Activated T-helper 1 cell treated with anti-CD3 and anti-CD28 coated beads, Interleukin-12 subunit alpha, Interleukin-12 subunit beta, Interleukin-2, Interleukin-4 antibody, amounts not matched to agents 30 ng/mL and 10 ng/mL and 1 ng/mL, durations not matched to agents 14 hours and 24 hours and 36 hours (primary cell): ENCODE measurements at regions of chr21 and their contacts with region 1.

Region 1: DNA sequence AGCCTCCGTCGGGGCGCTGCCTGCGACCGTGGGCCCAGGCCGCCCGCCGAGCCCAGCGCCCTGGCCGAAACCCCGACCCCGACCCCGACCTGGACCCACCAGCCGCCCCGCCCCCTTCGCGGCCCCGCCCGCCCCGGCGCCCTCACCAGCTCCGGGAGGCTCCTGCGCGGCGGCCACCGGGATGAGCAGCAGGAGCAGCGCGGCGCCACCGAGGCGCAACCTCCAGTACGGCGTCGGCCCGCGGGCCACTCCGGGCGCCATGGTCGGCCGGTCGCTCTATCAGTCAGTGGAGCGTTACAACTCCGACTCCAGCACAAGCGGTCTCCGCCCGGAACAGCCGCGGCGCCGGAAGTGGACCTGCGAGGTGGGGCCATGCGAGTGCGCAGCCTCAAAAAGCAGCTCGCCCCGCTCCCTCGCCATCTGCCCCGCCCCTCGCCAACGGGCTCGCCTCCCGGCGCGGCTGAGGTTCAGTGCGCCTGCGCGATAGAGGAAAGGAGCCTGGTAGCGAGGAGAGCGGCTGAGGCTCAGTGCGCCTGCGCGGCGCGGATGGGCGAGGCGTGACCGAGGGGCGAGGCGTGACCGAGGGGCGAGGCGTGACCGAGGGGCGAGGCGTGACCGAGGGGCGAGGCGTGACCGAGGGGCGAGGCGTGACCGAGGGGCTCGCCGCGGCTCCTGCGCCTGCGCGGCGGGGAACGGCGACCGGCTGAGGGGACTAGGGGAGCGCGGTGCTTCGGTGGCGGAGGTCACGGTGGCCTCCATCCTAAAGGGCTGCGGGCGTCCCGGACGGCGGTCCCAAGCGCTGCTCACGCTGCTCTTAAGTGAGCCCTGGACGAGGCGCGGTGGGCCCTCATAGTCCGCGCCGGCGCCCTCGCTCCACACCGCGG is at the start of gene PTTG1IP:
- DNase-seq: peak; percentile 100
- H3K4me3 Mint-ChIP-seq: peak within 1 kb of the TSS; percentile 93
- H3K27ac Mint-ChIP-seq: peak within 1 kb of the TSS; percentile 93
- H3K4me1 Mint-ChIP-seq: peaks cover 61% of the 10 kb centered on the region
- H3K27me3 Mint-ChIP-seq: no peaks in the 10 kb centered on the region
- total RNA-seq, gene PTTG1IP: 46.7 and 48.7 TPM in 2 replicates

Region 2: DNA sequence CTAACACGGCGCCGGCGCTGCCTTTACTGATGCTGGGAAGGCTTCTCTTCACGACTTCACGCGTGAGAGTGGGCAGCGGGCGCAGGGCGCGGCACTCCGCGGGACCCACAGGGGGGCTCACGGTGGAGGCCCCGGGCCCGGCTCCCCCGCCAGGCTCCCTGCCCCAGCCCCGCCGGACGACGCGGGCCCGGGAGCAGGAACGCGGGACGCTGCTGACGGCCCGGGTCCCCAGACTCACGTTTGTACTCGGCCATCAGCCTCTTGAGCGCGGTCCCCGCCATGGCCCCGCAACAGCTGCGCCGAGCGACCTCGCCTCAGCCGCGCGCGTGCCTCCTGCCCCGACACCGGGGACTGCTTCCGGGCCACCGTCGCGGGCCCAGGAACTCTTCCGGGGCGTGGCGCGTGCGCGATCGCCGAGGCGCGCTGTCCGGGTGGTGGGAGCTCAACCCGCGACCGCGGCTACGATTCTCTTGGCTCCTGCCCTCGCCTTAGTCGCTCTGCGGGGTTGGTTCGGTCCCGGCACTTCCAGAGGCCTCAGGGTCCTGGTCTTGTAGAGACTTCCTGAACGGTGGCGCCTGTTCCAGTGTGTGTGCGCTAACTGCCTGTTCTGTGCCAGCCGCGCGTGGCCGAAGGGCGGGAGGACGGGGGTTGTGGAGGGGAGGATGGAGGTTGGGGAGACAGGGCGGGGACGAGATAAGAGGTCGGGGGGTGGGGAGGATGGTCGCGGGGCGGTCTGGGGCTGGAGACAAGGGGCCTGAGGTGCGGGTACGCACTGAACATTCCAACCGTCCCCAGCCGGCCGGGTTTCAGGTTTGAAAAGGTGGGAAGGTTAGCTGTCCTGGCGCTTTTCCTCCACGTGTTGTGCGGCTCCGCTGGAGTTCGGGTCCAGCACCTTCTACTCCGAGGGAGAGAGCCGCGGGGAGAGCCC is 71.9 kb before region 1 on chr21 and contains the start of gene UBE2G2:
- intact Hi-C with region 1: loop called (anchors 1 kb)
- DNase-seq: peak; percentile 87
- H3K4me3 Mint-ChIP-seq: peak within 1 kb of the TSS; percentile 99
- H3K27ac Mint-ChIP-seq: peak within 1 kb of the TSS; percentile 94
- H3K4me1 Mint-ChIP-seq: peaks cover 54% of the 10 kb centered on the region
- H3K27me3 Mint-ChIP-seq: no peaks in the 10 kb centered on the region
- total RNA-seq, gene UBE2G2: 137 and 151 TPM in 2 replicates

Region 3: DNA sequence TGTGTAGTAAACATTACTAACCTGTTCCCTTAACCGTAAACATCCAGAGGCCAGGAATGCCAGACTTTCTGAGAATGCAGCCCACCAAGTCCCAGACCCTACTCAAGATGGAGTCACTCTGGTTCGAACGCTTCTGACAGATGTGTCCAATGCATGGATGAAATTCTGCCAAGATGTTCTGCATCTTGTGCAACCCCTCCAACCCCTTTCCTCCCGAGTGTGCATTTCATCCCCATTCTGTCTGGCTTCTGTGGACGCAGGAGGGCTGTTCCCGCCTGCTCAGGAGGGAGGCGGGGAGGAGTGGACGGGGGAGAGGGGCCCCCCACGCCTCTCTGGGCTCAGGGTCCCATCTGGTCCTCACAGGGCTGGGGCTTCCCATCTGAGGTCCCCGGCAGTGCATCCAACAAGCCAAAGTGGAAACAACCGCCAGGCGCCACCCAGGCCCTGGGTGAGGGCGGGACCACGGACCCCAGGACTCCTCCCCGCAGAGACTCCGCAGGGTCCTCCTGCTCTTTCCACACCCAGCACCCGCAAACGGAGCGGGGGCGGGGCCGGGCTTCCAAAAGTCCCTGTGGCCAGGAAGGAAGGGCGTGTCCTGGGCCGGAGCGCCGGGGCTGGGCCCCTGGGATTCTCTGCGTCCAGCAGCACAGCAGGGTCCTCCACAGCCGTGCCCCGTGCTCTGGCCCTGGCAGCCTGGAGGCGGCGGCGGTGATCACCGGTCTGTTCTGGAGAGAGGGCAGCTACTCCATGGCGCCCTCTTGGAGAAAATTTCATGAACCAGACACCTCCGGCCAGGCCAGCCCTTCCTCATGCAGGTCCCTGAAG is 28.0 kb before region 1 on chr21:
- intact Hi-C with region 1: loop called (anchors 1 kb)
- DNase-seq: peak; percentile 65
- H3K4me3 Mint-ChIP-seq: peak overlapping the region; percentile 65
- H3K27ac Mint-ChIP-seq: no peak overlapping the region
- H3K4me1 Mint-ChIP-seq: peaks cover 10% of the 10 kb centered on the region
- H3K27me3 Mint-ChIP-seq: peaks cover 5% of the 10 kb centered on the region

Region 4: DNA sequence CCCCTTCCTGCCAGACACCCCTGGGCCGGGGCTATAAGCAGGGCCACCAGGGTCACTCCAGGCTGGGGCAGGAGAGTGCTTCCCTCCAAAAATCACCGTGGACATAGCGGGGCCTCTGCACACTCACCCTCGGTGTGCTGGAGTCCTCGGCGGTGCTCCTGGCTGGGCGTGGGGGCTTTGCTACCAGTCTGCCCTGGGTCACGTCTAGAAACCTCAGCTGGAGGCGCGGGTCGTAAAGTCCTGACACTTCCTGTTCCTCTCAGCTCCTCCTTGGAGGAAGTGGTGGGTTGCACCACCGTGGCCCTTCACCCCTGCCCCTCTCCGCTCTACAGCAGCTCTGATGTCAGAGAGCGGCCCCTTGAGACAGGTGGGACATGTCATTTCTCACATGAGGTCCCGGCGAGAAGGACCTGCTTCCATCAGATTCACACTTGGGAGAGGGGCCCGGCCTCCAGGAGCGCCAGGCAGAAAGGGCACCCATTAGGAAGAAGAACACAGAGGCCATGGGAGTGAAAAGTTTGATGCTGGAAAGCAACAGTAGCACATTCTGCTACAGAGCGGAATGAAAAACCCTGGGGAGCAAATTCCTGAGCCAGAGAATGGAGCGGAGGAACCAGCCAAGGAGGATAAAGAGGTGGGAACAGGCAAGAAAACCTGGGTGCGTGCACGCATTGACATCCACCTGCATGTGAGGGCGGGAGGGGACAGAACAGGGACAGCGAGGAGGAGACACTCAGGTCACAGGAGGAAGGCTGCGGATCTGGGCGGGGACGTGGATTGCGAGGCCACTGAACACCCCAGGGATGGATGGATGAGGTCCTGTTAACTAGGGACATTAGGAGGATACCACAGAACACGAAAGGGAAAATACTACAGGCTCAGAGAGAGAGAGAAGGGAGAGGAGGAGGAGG is 47.4 kb after region 1 on chr21 and contains the start of gene ITGB2:
- intact Hi-C with region 1: loop called (anchors 2 kb)
- DNase-seq: peak; percentile 56
- H3K4me3 Mint-ChIP-seq: peak within 1 kb of the TSS; percentile 99
- H3K27ac Mint-ChIP-seq: peak within 1 kb of the TSS; percentile 93
- H3K4me1 Mint-ChIP-seq: peaks cover 84% of the 10 kb centered on the region
- H3K27me3 Mint-ChIP-seq: no peaks in the 10 kb centered on the region
- total RNA-seq, gene ITGB2: 292 and 294 TPM in 2 replicates

Region 5: GRCh38 chr21:44939532-44940115 is 66.0 kb after region 1 on chr21 and contains the start of gene SLX9:
- intact Hi-C with region 1: loop called (anchors 1 kb)
- DNase-seq: peak; percentile 78
- H3K4me3 Mint-ChIP-seq: peak within 1 kb of the TSS; percentile 91
- H3K27ac Mint-ChIP-seq: peak within 1 kb of the TSS; percentile 77
- H3K4me1 Mint-ChIP-seq: peaks cover 35% of the 10 kb centered on the region
- H3K27me3 Mint-ChIP-seq: no peaks in the 10 kb centered on the region
- total RNA-seq, gene SLX9: 83.4 and 84.7 TPM in 2 replicates